Dendritic cell treated with granulocyte-macrophage colony-stimulating factor and Interleukin-4, amounts not matched to agents 40 ng/mL and 50 ng/mL, for 4 days (primary cell): ENCODE measurements at regions of chr7 and their contacts with region 1.

Region 1: GRCh38 chr7:64625114-64626082 is 40.5 kb upstream of the ZNF107 start:
- H3K4me3 Mint-ChIP-seq: no peak overlapping the region
- H3K27ac Mint-ChIP-seq: no peak overlapping the region
- H3K4me1 Mint-ChIP-seq: no peaks in the 10 kb centered on the region
- H3K27me3 Mint-ChIP-seq: no peaks in the 10 kb centered on the region

Region 2: GRCh38 chr7:63008366-63008765 is 1617.0 kb before region 1 on chr7:
- intact Hi-C with region 1: loop called (anchors 10 kb)
- H3K4me3 Mint-ChIP-seq: no peak overlapping the region
- H3K27ac Mint-ChIP-seq: no peak overlapping the region
- H3K4me1 Mint-ChIP-seq: no peaks in the 10 kb centered on the region
- H3K27me3 Mint-ChIP-seq: no peaks in the 10 kb centered on the region

Region 3: GRCh38 chr7:64183126-64183742 is 442.2 kb before region 1 on chr7:
- intact Hi-C with region 1: loop called (anchors 2 kb)
- H3K4me3 Mint-ChIP-seq: no peak overlapping the region
- H3K27ac Mint-ChIP-seq: no peak overlapping the region
- H3K4me1 Mint-ChIP-seq: no peaks in the 10 kb centered on the region
- H3K27me3 Mint-ChIP-seq: peaks cover 10% of the 10 kb centered on the region

Region 4: GRCh38 chr7:64686493-64687184 is 61.2 kb after region 1 on chr7:
- intact Hi-C with region 1: no loop called
- H3K4me3 Mint-ChIP-seq: no peak overlapping the region
- H3K27ac Mint-ChIP-seq: no peak overlapping the region
- H3K4me1 Mint-ChIP-seq: peaks cover 5% of the 10 kb centered on the region
- H3K27me3 Mint-ChIP-seq: no peaks in the 10 kb centered on the region

Region 5: GRCh38 chr7:64802699-64803098 is 177.3 kb after region 1 on chr7:
- intact Hi-C with region 1: no loop called
- H3K4me3 Mint-ChIP-seq: no peak overlapping the region
- H3K27ac Mint-ChIP-seq: no peak overlapping the region
- H3K4me1 Mint-ChIP-seq: no peaks in the 10 kb centered on the region
- H3K27me3 Mint-ChIP-seq: no peaks in the 10 kb centered on the region